ENCODE measurements at regions of chr12 and their contacts with region 1.

Region 1: GRCh38 chr12:12916135-12916944 is 25.0 kb downstream of the GPRC5A start:
- DNase-seq: peak; percentile 89 to 98
- H3K4me3 ChIP-seq: no peak overlapping the region
- CTCF ChIP-seq: peak in 2 of 3 donors; percentile 55 to 96
- POLR2A ChIP-seq: no peak

Region 2: DNA sequence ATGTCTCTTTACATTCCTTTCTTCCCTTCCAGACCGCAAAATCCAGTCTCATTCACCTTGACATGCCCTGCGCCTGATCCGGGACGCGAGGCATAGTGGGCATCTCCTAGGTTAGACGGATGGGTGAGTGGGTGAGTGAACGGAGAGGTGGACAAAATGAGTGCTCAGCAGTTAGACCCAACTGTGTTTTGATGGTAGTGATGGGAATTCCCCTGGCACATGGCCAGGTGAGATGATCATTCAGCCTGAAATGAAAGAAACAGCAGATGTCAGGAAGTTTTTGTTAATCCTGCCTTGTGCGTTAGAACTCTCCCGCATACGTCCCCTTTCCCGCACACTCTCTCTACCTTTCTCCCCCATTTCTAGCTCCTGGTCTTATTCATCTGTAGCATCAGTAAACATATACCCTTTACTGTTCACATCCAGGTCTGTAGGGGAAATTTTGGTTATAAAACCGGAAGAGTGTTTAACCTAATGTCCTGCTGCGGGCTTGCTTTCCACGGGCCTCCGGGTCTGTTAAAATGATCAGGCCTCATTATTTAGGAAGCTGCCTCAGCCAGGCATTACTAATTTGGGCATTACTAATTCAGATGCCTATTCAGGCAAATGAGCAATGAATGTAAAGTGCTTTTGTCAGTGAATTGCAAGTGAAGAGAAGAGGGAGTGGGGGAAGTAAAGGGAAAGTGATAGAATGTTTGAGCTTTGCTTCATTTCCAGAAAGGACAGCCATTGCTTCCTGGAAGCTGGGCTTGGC is 1094.1 kb before region 1 on chr12:
- intact Hi-C with region 1: no loop called
- DNase-seq: peak in 1 of 2 donors; percentile 77
- H3K4me3 ChIP-seq: no peak overlapping the region
- CTCF ChIP-seq: no peak
- POLR2A ChIP-seq: no peak

Region 3: GRCh38 chr12:12975322-12976077 is 59.2 kb after region 1 on chr12:
- intact Hi-C with region 1: loop called (anchors 10 kb)
- DNase-seq: no peak
- H3K4me3 ChIP-seq: no peak overlapping the region
- CTCF ChIP-seq: no peak
- POLR2A ChIP-seq: no peak

Region 4: DNA sequence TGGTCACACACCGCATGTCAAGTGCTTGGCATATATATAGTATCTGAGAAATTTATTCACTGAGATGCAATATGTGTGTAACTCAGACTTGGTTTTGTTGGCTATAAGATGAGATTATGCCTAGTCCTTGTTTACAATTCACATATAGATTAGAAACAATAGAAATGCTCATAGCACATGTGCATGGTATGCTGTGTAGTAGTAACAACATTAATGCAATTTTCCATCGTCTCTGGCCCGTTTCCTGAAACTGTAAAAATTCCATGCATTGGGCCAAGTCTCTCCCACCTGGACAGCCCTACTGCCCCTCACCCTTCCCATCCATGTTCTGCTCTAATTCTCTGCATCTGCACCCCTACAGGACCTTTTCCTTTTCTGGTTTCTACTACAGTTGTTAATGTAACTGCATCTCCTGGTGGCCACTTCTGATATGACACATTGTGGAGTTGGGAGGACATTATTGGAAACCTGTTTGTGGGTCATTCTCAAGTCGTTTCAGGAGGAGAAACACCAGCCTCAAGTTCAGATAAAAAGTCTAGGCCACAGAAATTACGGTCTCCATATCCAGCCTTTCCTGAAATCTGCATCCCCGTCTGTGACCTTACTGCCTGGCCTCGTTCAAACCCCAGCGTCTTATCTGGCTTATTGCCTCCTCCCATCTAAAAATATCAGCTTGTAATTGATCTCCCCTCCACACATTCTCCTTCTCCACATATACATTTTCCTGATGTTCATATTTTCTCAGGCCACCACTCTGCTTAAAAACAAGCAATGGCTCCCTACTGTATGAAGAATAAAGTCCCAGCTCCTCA is 317.7 kb after region 1 on chr12:
- intact Hi-C with region 1: loop called (anchors 10 kb)
- DNase-seq: peak in 1 of 2 donors; percentile 72
- H3K4me3 ChIP-seq: no peak overlapping the region
- CTCF ChIP-seq: peak in 1 of 3 donors; percentile 83
- POLR2A ChIP-seq: no peak

Measured in lower leg skin (tissue), 4 donors.